BJ (cell line): ENCODE measurements at regions of chr19 and their contacts with region 1.

Region 1: DNA sequence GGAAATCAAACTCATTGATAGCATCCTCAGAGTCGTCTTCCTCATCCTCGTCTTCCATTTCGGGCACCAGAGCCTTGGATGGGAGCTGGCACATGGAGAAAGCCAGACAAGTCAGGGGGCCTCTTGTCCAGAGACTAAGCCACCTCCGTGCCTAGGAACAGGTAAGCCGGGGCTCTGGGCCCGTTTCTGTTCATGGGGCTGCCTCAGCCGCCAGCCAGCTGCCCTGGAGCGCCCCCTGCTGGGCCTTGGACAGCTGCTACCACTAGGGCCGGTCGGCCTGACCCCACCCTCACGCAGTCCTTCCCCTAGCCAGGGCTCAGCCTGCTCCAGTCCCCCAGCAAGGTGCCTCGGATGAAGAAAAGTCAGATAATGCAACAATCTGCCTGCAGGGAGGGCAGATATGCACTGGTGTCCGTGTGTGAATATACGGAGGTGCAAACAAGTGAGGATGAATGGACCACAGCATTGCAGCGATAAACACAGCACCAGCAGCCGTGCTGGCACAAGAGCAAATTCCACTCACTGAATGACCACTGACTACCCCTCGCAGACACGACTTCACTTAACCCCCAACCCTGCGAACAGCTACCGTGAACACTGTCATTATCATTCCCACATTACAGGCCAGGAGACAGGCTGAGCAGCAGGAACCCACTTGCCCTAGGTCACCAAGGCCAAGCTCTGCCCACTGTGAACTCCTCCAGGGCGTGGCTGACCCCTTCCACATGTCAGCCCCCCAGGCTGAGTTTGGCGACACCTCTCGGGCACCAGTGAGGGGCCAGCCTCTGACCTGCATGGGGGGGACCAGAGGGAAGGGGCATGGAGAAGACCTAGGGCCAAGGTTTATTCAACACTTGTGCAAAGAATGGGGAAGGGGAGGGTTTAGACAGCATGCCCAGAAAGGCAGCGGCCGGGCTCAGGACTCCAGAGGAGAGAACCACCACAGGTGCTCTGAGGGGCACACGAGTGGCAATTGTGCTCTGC is 12.1 kb upstream of the PRKD2 start:
- DNase-seq: no peak
- H3K4me3 ChIP-seq: no peak overlapping the region
- H3K27me3 ChIP-seq: no peaks in the 10 kb centered on the region
- CTCF ChIP-seq: peak; percentile 95

Region 2: GRCh38 chr19:46634045-46634655 is 94.8 kb before region 1 on chr19:
- CTCF ChIA-PET with region 1: interaction called, 10 read pairs
- POLR2A ChIA-PET with region 1: no interaction called
- DNase-seq: no peak
- H3K4me3 ChIP-seq: peak overlapping the region; percentile 36
- H3K27me3 ChIP-seq: no peaks in the 10 kb centered on the region
- CTCF ChIP-seq: no peak

Region 3: DNA sequence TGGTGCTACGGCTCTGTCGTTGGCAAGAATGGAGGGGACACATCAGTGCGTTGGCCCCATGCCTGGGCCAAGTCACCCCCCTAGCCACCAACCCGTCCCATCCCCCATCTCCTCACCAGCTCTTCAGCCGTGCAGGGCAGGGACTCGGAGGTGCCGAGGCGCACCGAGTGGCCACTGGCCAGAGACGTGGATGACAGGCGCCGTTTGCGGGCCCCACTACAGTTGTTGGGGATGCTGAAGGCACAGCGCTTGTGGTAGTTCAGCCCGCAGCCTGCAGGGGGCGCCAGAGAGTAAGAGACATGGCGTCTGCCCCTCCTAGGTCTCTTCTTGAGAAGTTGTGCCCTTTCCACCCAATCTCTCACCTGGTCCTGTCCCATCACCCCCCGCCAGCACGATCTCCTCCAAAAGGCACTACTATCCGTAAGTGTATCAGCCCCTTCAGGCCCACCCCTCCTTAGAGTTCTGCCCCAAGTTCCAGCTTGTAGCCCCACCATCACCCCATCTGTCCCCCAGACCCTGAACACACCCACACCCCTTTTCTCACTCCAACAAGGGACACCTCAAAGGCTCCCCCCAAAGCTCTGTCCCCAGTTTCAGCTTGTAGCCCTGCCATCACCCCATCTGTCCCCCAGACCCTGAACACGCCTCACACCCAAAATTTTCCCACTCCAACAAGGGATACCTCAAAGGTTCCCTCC is 24.5 kb before region 1 on chr19:
- CTCF ChIA-PET with region 1: interaction called, 27 read pairs
- POLR2A ChIA-PET with region 1: no interaction called
- DNase-seq: no peak
- H3K4me3 ChIP-seq: no peak overlapping the region
- H3K27me3 ChIP-seq: no peaks in the 10 kb centered on the region
- CTCF ChIP-seq: peak; percentile 93

Region 4: GRCh38 chr19:46713781-46714443 is 15.1 kb before region 1 on chr19:
- CTCF ChIA-PET with region 1: interaction called, 37 read pairs
- POLR2A ChIA-PET with region 1: no interaction called
- DNase-seq: peak; percentile 25
- H3K4me3 ChIP-seq: peak overlapping the region; percentile 80
- H3K27me3 ChIP-seq: no peaks in the 10 kb centered on the region
- CTCF ChIP-seq: no peak

Region 5: GRCh38 chr19:46746281-46747013 is 17.5 kb after region 1 on chr19 and contains the start of gene STRN4:
- CTCF ChIA-PET with region 1: interaction called, 77 read pairs
- POLR2A ChIA-PET with region 1: no interaction called
- DNase-seq: no peak
- H3K4me3 ChIP-seq: peak within 1 kb of the TSS; percentile 99
- H3K27me3 ChIP-seq: no peaks in the 10 kb centered on the region
- CTCF ChIP-seq: no peak
- polyA plus RNA-seq, gene STRN4: 40.5 and 78.6 TPM in 2 replicates

Region 6: GRCh38 chr19:46828484-46828883 is 99.5 kb after region 1 on chr19:
- CTCF ChIA-PET with region 1: no interaction called
- POLR2A ChIA-PET with region 1: no interaction called
- DNase-seq: no peak
- H3K4me3 ChIP-seq: no peak overlapping the region
- H3K27me3 ChIP-seq: no peaks in the 10 kb centered on the region
- CTCF ChIP-seq: no peak